ENCODE measurements at regions of chr5 and their contacts with region 1.

Region 1: GRCh38 chr5:136062366-136063274 is 33.8 kb downstream of the TGFBI start:
- DNase-seq: no peak
- H3K4me3 ChIP-seq: no peak overlapping the region
- H3K27ac ChIP-seq: no peak overlapping the region
- H3K4me1 ChIP-seq: peaks cover 0 to 27% (median 4%) of the 10 kb centered on the region in 3 donors
- H3K27me3 ChIP-seq: no peaks in the 10 kb centered on the region
- CTCF ChIP-seq: peak in 5 of 6 experiments; percentile 43 to 78 (median 50)
- POLR2A ChIP-seq: no peak

Region 2: DNA sequence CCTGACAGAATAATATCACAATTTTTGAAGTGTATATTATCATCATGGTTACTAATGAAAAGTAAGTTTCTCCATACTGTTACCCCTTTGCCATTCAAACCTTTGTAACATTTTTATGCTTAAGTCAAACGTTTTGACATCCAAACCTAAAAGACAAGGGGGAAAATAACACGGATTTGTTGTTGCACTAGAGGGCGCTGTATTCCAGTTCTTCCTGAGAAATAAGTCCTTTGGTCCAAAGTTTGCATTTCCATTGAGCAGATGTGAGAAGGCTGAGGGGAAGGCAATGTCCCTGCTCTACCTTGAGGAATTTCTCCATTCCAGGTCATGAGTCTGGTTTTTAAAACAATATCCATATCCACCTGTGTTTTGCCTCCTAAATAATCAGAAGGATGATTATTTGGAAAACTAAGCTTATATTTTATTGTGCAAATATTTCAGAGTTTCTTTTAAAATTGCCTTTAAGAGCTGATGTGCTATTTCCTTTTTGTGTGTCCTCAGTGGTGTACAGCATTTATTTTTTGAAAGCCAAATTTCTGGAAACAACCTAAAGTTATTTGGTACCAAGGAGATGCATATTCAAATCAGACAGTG is 117.6 kb before region 1 on chr5:
- intact Hi-C with region 1: loop called (anchors 5 kb)
- DNase-seq: no peak
- H3K4me3 ChIP-seq: no peak overlapping the region
- H3K27ac ChIP-seq: no peak overlapping the region
- H3K4me1 ChIP-seq: no peaks in the 10 kb centered on the region
- H3K27me3 ChIP-seq: peaks cover 0 to 10% (median 0%) of the 10 kb centered on the region in 4 donors
- CTCF ChIP-seq: peak; percentile 35 to 80 (median 72)
- POLR2A ChIP-seq: no peak